MCF 10A (cell line): ENCODE measurements at regions of chr1 and their contacts with region 1.

Region 1: GRCh38 chr1:201447911-201448871 is 20.8 kb downstream of the PHLDA3 start:
- DNase-seq: peak; percentile 89
- H3K4me3 Mint-ChIP-seq: no peak overlapping the region
- H3K27ac Mint-ChIP-seq: peak overlapping the region; percentile 36
- H3K4me1 Mint-ChIP-seq: peaks cover 8% of the 10 kb centered on the region
- H3K27me3 Mint-ChIP-seq: no peaks in the 10 kb centered on the region
- CTCF ChIP-seq: peak; percentile 98

Region 2: DNA sequence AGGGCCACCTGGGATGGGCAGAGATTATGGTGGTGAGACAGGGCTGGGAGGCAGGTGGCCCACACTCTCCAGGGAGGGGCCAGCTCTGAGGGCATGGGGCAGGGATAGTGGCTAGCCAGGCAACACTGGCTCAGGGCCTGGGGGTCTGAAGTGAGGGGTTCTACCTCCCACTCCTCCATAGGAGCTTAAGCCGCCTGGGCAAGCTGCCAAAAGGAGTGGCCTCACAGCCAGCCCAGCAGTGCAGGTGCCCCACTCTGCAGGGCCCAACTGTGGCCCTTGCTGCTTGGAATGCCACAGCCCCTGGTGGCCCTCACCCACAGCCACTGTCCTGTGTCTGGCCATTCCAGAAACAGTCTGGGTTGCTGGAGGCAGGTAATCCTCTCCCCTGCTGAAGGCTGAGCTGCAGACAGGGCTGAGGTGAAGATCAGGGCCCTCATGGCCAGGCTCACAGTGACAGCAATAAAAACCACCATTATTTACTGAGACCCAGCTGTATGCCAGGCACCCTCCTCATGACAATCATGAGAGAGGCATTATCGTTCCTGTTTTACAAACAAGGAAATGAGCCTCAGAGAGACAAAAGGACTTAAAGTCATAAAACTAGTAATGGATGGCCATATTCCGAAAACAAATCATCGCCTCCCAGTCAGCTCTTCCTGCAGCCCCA is 455.7 kb before region 1 on chr1:
- CTCF ChIA-PET with region 1: no interaction called
- POLR2A ChIA-PET with region 1: no interaction called
- intact Hi-C with region 1: no loop called
- DNase-seq: no peak
- H3K4me3 Mint-ChIP-seq: no peak overlapping the region
- H3K27ac Mint-ChIP-seq: no peak overlapping the region
- H3K4me1 Mint-ChIP-seq: no peaks in the 10 kb centered on the region
- H3K27me3 Mint-ChIP-seq: no peaks in the 10 kb centered on the region
- CTCF ChIP-seq: no peak

Region 3: DNA sequence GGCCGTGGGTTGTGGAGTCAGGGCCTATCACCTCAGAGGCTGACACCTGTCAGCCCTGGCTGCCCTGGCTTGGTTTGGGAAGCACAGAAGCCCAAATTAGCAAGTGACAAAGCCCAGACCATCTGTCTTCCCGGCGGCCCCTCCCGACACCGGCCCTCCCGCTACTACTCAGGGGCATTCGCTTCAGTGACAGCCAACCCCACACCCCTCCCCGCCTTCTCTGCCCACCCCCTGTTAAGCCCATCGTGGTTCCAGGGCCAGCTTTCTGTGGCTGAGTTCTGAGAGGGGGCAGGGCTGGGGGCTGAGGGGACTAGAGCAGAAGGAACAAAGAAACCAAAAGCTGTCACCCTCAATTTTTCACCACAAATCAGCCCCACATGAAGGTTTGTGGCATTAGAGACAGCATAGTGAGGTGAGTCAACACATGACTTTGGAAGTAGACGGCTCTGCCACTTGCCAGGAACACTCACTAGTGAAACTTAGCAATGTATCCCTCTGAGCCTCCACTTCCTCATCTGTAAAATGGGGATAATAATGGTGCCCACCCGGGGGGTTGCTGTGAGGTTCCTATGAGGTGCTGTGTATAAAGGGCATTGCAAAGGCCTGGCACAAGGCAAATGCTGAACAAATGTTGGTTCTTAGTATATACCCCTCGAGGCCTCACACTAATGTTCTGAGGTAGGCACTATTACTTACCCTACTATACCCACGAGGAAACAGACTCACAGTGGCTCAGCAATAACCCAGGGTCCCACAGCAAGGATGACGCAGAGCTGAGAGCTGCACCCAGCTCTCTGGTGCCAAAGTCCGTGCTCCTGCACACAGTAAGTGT is 21.5 kb before region 1 on chr1:
- CTCF ChIA-PET with region 1: interaction called, 10 read pairs
- POLR2A ChIA-PET with region 1: interaction called, 4 read pairs
- intact Hi-C with region 1: no loop called
- DNase-seq: no peak
- H3K4me3 Mint-ChIP-seq: no peak overlapping the region
- H3K27ac Mint-ChIP-seq: no peak overlapping the region
- H3K4me1 Mint-ChIP-seq: no peaks in the 10 kb centered on the region
- H3K27me3 Mint-ChIP-seq: peaks cover 1% of the 10 kb centered on the region
- CTCF ChIP-seq: no peak